H1 (cell line): ENCODE measurements at regions of chr2 and their contacts with region 1.

Region 1: DNA sequence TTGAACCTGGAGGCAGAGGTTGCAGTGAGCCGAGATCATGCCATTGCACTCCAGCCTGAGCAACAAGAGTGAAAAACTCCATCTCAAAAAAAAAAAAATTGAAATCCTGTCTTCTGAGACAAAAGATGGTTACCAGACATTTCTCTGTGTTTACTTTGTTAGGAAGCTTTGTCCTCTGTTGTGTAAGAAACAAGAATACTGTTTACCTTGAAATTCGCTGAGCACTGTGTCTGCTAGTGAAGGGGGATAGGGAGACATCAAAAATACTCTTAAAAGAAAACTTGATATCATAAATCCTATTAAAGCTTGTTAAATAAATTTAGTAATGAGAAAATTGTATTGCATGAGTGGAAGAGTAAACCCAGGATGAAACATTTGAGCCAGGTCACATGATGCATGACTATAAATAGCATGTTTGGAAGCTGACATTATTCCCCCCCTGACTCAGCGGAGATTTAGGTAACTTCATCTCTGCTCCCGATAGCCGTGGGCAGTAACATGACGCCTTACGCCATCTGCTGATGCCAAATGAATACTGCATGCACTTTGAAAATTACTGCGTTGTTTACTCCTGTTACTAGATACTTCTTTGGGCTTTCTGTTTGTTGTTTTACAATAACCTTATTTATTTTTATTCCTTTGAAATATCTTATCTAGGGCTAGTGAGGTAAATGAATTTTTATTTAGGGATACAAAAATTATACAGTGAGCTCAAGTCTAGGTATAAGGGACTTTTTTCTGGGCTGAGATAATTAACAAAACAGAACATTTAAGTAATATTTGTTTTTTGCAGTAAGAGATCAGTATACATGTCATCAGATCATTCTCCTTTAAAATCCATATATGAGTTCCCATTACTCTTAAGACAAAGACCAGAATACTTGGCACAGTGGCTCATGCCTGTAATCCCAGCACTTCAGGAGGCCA is 134.9 kb downstream of the MAP3K20 start:
- DNase-seq: peak in 1 of 2 experiments; percentile 63
- H3K4me3 ChIP-seq: no peak overlapping the region
- H3K27ac ChIP-seq: no peak overlapping the region
- H3K4me1 ChIP-seq: no peaks in the 10 kb centered on the region
- H3K27me3 ChIP-seq: no peaks in the 10 kb centered on the region
- CTCF ChIP-seq: peak; percentile 60 to 84 (median 82)
- EP300 ChIP-seq: no peak
- POLR2A ChIP-seq: no peak
- RAD21 ChIP-seq: peak; percentile 90 to 95

Region 2: DNA sequence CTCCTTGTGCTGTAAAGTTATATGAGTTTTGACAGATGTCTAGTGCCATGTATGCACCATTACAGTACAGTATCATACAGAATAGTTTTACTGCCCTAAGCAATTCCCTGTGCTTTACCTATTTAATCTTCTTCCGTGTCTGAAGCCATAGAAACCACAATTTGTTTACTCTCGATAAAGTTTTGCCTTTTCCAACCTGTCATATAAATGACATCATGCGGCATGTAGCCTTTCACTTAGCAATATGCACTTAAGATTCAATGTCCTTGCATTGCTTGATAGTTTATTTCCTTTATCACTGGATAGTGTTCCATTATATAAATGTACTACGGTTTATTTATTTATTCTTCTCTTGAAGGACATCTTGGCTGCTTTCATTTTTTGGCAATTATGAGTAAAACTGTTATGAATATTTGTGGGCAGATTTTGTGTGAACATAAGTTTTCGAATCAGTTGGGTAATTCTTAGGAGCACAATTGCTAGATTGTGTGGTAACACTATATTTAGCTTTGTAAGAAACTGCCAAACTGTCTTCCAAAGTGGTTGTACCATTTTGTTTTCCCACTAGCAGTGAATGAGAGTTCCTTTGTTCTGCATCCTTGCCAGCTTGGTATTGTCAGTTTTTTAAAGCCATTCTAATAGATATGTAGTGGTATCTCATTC is 271.7 kb before region 1 on chr2:
- CTCF ChIA-PET with region 1: no interaction called
- POLR2A ChIA-PET with region 1: no interaction called
- DNase-seq: no peak
- H3K4me3 ChIP-seq: no peak overlapping the region
- H3K27ac ChIP-seq: no peak overlapping the region
- H3K4me1 ChIP-seq: no peaks in the 10 kb centered on the region
- H3K27me3 ChIP-seq: no peaks in the 10 kb centered on the region
- CTCF ChIP-seq: no peak
- EP300 ChIP-seq: no peak
- POLR2A ChIP-seq: no peak
- RAD21 ChIP-seq: no peak

Region 3: DNA sequence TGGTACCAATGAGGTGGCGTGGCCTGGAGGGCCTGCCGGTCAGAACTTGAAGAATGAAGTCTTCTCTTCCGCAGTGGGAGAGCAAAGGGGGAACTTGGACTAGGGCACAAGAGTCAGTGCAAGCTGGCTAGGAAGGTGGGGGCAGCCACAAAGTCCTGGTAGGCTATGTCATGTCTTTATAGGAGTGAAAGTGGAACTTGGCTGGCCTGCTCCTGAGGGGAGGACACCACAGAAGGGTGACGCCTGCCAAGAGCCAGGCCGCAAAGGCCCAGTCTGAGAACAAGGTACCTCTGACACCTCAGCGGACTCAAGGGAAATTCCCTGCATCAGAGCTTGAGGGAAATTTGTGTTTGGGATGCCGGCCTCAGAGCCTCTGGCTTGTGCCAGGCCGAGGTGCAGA is 167.1 kb before region 1 on chr2:
- CTCF ChIA-PET with region 1: interaction called, 16 read pairs
- POLR2A ChIA-PET with region 1: no interaction called
- DNase-seq: no peak
- H3K4me3 ChIP-seq: no peak overlapping the region
- H3K27ac ChIP-seq: no peak overlapping the region
- H3K4me1 ChIP-seq: no peaks in the 10 kb centered on the region; a peak in 1 of 7 replicates
- H3K27me3 ChIP-seq: no peaks in the 10 kb centered on the region
- CTCF ChIP-seq: no peak
- EP300 ChIP-seq: no peak
- POLR2A ChIP-seq: no peak
- RAD21 ChIP-seq: no peak

Region 4: DNA sequence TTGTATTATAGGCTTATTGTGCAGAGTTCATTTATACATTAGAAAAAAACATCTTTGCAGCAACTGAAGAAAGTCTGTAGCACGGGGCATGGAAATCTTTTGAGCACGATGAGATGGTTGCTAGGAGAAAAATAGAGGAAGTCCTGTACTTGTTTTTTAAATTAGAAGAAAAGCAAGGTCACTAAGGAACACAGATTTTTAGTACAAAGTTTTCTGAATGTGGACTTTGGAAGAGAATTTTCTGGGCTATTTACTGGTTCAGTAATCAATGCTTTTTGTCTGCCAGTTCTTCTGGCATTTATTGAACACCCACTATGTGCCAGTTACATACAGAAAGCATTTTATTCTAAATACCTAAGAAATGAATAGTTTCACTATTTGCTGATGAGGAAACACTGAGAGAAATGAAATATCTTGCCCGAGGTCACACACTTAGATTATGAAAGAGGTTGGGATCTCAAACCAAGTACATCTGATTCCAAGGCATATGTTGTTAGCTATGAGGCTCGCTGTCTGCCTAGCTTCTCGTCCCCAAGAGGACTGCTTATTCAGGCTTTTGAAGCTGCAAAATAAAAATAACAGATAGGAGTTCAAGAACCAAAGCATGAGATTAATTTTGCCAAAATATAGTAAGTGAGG is 150.5 kb before region 1 on chr2:
- CTCF ChIA-PET with region 1: interaction called, 10 read pairs
- POLR2A ChIA-PET with region 1: no interaction called
- DNase-seq: no peak
- H3K4me3 ChIP-seq: no peak overlapping the region
- H3K27ac ChIP-seq: no peak overlapping the region
- H3K4me1 ChIP-seq: 0 out of 7 replicates have a peak, but pooled peaks cover 0 to 2% (median 0%) of the 10 kb centered on the region in 4 experiments
- H3K27me3 ChIP-seq: no peaks in the 10 kb centered on the region
- CTCF ChIP-seq: no peak
- EP300 ChIP-seq: no peak
- POLR2A ChIP-seq: no peak
- RAD21 ChIP-seq: no peak

Region 5: DNA sequence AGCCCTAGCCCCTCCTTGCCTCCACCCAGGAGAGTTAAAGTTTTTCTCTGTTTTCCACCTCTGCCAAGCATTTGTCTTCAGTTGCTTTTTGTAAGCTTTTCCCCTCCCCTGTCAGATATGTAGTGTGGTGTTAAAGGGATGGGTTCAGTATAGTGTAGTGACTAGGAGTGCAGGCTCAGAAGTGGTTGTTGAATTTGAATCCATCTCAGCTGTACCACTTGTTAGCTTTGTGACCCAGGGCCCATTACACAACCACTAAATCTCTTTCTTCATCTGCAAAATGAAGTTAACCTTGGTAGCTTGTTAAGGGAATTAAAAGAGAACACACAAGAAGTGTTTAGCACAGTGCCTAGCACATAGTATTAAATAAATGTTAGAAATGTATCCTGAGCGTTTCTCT is 78.0 kb before region 1 on chr2:
- CTCF ChIA-PET with region 1: interaction called, 12 read pairs
- POLR2A ChIA-PET with region 1: no interaction called
- DNase-seq: no peak
- H3K4me3 ChIP-seq: no peak overlapping the region
- H3K27ac ChIP-seq: no peak overlapping the region
- H3K4me1 ChIP-seq: peaks cover 0 to 3% (median 0%) of the 10 kb centered on the region in 4 experiments; a peak in 2 of 7 replicates
- H3K27me3 ChIP-seq: no peaks in the 10 kb centered on the region
- CTCF ChIP-seq: no peak
- EP300 ChIP-seq: no peak
- POLR2A ChIP-seq: no peak
- RAD21 ChIP-seq: no peak

Region 6: DNA sequence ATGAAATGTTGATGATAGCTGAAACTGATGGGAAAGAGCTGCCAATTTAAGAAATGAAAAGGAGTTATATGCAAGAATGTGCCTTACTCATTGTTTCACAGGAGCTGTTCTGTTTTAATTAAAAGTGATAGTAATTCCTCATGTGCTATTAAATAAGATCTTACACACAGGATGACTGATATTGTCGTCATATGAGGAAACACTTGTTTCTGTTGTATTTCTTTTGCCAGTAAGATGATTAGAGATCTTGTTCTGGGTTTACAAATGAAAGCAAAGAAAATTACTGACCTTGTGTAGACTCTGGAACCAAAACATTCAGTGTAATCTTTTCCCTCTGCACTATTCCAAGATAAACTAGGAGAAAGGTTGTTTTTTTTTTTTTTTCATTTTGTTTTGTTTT is 11.2 kb before region 1 on chr2:
- CTCF ChIA-PET with region 1: interaction called, 32 read pairs
- POLR2A ChIA-PET with region 1: interaction called, 3 read pairs
- DNase-seq: no peak
- H3K4me3 ChIP-seq: no peak overlapping the region
- H3K27ac ChIP-seq: no peak overlapping the region
- H3K4me1 ChIP-seq: peaks cover 4 to 9% (median 7%) of the 10 kb centered on the region in 4 experiments; a peak in 5 of 7 replicates
- H3K27me3 ChIP-seq: no peaks in the 10 kb centered on the region
- CTCF ChIP-seq: no peak
- EP300 ChIP-seq: no peak
- POLR2A ChIP-seq: no peak
- RAD21 ChIP-seq: no peak